HepG2 (cell line): ENCODE measurements at regions of chr1 and their contacts with region 1.

Region 1: GRCh38 chr1:153608742-153609584 is 4.0 kb downstream of the S100A16 start:
- DNase-seq: peak; percentile 96
- ATAC-seq: peak; percentile 82
- H3K4me3 ChIP-seq: peak overlapping the region; percentile 62 to 83 (median 64)
- H3K27ac ChIP-seq: peak overlapping the region; percentile 99
- H3K4me1 ChIP-seq: peaks cover 61% of the 10 kb centered on the region
- H3K27me3 ChIP-seq: no peaks in the 10 kb centered on the region; a peak in 1 of 5 replicates
- CTCF ChIP-seq: no peak
- EP300 ChIP-seq: peak; percentile 14 to 55; a peak in 3 of 4 replicates
- POLR2A ChIP-seq: peak; percentile 82 to 91
- RAD21 ChIP-seq: 0 out of 2 replicates have a peak, but pooled peaks have one; percentile 11

Region 2: DNA sequence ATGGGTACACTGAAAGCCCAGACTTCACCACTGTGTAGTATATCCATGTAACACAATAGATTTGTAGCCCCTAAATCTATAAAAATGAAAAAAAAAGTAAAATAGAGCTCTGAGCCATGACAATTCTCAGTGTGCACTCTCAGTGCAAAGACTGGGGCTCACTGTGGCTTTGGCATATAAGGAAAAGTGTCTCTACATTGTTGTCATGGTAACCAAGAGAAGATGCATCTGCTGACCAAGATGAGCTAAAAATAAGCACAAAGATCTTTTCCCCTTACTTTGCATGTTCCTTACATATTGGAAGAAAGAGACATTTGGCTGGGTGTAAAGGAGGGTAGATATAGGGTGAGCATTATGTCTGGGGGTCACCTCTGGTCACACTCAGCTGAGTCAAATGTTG is 272.3 kb before region 1 on chr1:
- CTCF ChIA-PET with region 1: no interaction called
- POLR2A ChIA-PET with region 1: no interaction called
- in situ Hi-C with region 1: no loop called
- intact Hi-C with region 1: no loop called
- DNase-seq: no peak
- ATAC-seq: no peak
- H3K4me3 ChIP-seq: no peak overlapping the region
- H3K27ac ChIP-seq: no peak overlapping the region
- H3K4me1 ChIP-seq: no peaks in the 10 kb centered on the region
- H3K27me3 ChIP-seq: no peaks in the 10 kb centered on the region
- CTCF ChIP-seq: no peak
- EP300 ChIP-seq: no peak
- POLR2A ChIP-seq: no peak
- RAD21 ChIP-seq: no peak

Region 3: GRCh38 chr1:153592748-153593147 is 16.2 kb before region 1 on chr1:
- CTCF ChIA-PET with region 1: no interaction called
- POLR2A ChIA-PET with region 1: interaction called, 12 read pairs
- in situ Hi-C with region 1: no loop called
- intact Hi-C with region 1: no loop called
- DNase-seq: no peak
- ATAC-seq: no peak; the same call in 2 of the 3 replicates
- H3K4me3 ChIP-seq: no peak overlapping the region
- H3K27ac ChIP-seq: no peak overlapping the region
- H3K4me1 ChIP-seq: peaks cover 10% of the 10 kb centered on the region; the same call in 1 of the 2 replicates
- H3K27me3 ChIP-seq: 0 out of 5 replicates have a peak, but pooled peaks cover 0 to 1% of the 10 kb centered on the region in 2 experiments
- CTCF ChIP-seq: no peak
- EP300 ChIP-seq: no peak
- POLR2A ChIP-seq: no peak
- RAD21 ChIP-seq: no peak

Region 4: GRCh38 chr1:153827168-153827964 is 218.4 kb after region 1 on chr1:
- CTCF ChIA-PET with region 1: no interaction called
- POLR2A ChIA-PET with region 1: no interaction called
- in situ Hi-C with region 1: no loop called
- intact Hi-C with region 1: no loop called
- DNase-seq: no peak
- ATAC-seq: no peak
- H3K4me3 ChIP-seq: no peak overlapping the region
- H3K27ac ChIP-seq: no peak overlapping the region
- H3K4me1 ChIP-seq: no peaks in the 10 kb centered on the region
- H3K27me3 ChIP-seq: no peaks in the 10 kb centered on the region
- CTCF ChIP-seq: no peak
- EP300 ChIP-seq: no peak
- POLR2A ChIP-seq: no peak
- RAD21 ChIP-seq: no peak

Region 5: DNA sequence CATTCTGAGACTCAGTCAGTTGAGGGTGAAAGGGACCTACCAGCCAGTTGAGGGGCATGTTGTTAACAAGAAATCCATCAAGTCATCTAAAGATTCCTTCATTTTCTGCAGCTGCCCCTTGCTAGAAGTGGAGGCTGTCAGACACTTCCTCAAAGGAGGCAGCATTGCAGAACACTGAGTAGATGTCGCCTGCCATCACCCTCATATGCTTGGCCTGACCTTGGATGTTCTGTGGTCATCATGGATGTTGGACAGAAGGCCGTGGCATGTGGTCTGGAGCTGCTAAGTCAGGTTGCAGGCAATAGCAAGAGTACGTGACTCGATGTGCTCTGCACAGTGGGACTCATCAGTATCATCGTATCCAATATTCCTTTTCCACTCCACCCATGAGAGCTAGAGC is 243.2 kb after region 1 on chr1:
- CTCF ChIA-PET with region 1: no interaction called
- POLR2A ChIA-PET with region 1: no interaction called
- in situ Hi-C with region 1: no loop called
- intact Hi-C with region 1: no loop called
- DNase-seq: no peak
- ATAC-seq: no peak
- H3K4me3 ChIP-seq: no peak overlapping the region
- H3K27ac ChIP-seq: no peak overlapping the region
- H3K4me1 ChIP-seq: no peaks in the 10 kb centered on the region
- H3K27me3 ChIP-seq: no peaks in the 10 kb centered on the region
- CTCF ChIP-seq: no peak
- EP300 ChIP-seq: no peak
- POLR2A ChIP-seq: no peak
- RAD21 ChIP-seq: no peak